ENCODE measurements at regions of chr3 and their contacts with region 1.

Region 1: DNA sequence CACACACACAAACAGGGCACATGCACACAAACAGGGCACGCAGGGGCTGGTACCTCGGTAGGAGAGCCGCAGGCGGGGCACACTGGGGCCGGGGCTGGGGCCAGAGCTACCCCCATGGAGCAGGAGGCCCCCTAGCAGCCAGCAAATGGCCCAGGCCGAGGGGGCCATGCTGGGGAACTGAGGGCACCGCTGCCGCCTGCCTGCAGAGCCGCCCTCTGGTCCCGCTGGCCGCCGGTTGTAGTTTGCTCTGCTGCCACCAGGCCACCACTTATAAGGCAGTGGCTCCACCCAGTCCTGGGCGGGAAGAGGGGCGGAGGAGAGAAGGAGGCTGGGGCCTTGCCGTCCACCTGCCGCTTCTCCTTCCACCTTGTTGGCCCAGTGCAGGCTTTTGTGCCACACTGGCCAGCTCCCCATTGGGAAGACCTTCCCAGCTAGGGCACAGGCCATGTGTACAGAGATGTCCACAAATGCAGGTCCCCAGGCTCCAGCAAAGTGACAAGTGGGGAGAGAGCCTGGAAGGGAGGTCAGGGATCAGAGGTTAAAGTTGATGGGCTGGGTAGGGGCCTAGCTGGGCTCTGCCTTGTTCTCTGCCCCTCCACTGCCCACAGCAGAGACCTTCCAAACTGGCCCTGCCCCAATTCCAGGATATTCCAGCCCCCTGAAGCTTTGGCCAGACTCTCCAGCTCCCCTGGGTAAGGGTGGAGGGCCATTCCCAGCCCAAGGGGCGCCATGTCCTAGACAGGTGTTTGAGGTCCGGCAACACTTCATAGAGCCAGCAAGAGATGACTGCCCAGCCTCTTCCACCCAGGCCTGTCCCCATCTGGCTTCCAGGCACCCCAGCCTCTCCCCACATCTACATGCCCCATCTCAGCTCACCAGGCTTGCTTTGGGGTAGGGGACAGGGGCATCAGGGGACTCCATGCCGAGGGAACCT is at the start of gene SEMA3G:
- DNase-seq: peak; percentile 64 to 74 (median 71)
- ATAC-seq: peak; percentile 96
- H3K4me3 ChIP-seq: no peak within 1 kb of the TSS
- H3K27ac ChIP-seq: no peak within 1 kb of the TSS
- H3K4me1 ChIP-seq: peaks cover 0 to 31% of the 10 kb centered on the region in 2 experiments; a peak in 2 of 5 replicates
- H3K27me3 ChIP-seq: peaks cover 0 to 4% of the 10 kb centered on the region in 2 experiments; a peak in 1 of 5 replicates
- CTCF ChIP-seq: peak; percentile 52 to 72 (median 54)
- EP300 ChIP-seq: no peak
- POLR2A ChIP-seq: no peak
- RAD21 ChIP-seq: no peak; a peak in 1 of 4 replicates
- polyA plus RNA-seq, gene SEMA3G: not detected

Region 2: DNA sequence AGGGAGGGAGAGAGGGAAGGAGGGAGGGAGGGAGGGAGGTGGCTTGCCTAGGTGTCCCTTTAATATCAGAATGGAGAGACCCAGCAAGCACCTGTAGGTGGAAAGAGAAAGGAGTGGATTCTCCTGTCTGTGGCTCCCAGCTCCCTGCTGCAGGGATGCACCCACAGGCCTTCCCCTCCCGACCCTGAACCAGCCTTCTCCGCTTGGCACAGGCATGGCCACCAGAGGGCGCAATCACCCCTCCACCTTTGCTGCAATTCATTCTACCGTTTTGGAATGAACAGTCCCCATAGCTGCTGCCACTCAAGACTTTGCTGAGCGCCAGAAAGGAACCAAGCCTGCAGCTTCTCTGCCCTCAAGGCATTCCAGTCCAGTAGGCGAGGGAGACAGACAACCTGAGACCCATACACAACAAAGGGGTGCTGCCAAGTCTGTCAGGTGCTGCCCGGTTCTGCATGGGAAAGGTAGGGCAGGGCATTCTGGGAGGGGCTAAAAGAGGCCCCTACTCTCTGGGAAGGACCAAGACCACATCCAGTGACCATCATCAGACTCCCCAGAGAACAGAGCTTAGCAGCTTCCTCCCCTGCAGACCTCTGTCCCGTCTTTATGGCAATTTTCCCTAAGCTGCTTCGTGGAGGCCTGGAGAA is 224.6 kb before region 1 on chr3:
- CTCF ChIA-PET with region 1: no interaction called
- POLR2A ChIA-PET with region 1: no interaction called
- in situ Hi-C with region 1: no loop called
- intact Hi-C with region 1: loop called (anchors 5 kb)
- DNase-seq: peak; percentile 75 to 82 (median 78)
- ATAC-seq: peak; percentile 91
- H3K4me3 ChIP-seq: no peak overlapping the region
- H3K27ac ChIP-seq: no peak overlapping the region
- H3K4me1 ChIP-seq: peaks cover 27 to 52% of the 10 kb centered on the region in 2 experiments
- H3K27me3 ChIP-seq: no peaks in the 10 kb centered on the region
- CTCF ChIP-seq: peak; percentile 83 to 87 (median 86)
- EP300 ChIP-seq: no peak
- POLR2A ChIP-seq: no peak
- RAD21 ChIP-seq: peak; percentile 39 to 75; a peak in 3 of 4 replicates

Region 3: DNA sequence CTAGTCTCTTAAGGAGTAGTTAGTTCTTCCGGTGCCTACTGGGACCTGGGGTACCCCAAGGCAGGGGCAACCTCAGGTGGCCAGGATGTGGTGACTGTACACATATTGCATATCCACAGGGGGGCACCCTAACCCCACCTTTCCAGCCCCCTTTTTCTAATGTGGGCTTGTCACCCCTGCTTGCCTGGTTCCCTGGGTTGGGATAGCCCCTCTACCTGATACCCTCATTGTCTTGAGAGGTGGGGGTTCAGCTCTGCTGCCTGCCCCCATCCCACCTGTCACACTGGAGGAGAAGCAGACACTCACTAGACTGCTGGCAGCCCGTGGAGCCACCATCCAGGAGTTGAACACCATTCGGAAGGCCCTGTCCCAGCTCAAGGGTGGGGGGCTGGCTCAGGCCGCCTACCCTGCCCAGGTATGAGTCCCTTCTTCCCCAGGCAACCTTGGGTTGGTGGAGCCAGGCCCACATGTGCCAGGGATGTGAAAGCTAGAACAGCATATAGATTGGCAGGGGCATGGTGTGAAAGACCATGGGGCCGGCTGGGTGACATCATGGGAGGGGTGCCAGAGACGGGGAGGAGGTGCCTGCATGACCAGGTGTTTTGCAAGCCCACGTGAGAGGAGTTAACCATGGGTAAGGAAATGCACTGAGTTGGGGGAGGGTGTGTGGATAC is 153.5 kb before region 1 on chr3:
- CTCF ChIA-PET with region 1: no interaction called
- POLR2A ChIA-PET with region 1: no interaction called
- in situ Hi-C with region 1: loop called (anchors 10 kb)
- intact Hi-C with region 1: loop called (anchors 5 kb)
- DNase-seq: peak in 2 of 4 experiments; percentile 52 to 57
- ATAC-seq: peak; percentile 48
- H3K4me3 ChIP-seq: no peak overlapping the region
- H3K27ac ChIP-seq: no peak overlapping the region
- H3K4me1 ChIP-seq: peaks cover 12 to 26% of the 10 kb centered on the region in 2 experiments; a peak in 4 of 5 replicates
- H3K27me3 ChIP-seq: no peaks in the 10 kb centered on the region
- CTCF ChIP-seq: peak; percentile 60 to 77 (median 77)
- EP300 ChIP-seq: no peak
- POLR2A ChIP-seq: no peak
- RAD21 ChIP-seq: peak; percentile 80 to 87

Region 4: GRCh38 chr3:52407779-52408178 is 37.3 kb before region 1 on chr3:
- CTCF ChIA-PET with region 1: interaction called, 7 read pairs
- POLR2A ChIA-PET with region 1: interaction called, 3 read pairs
- in situ Hi-C with region 1: no loop called
- intact Hi-C with region 1: loop called (anchors 1 kb)
- DNase-seq: no peak
- ATAC-seq: no peak
- H3K4me3 ChIP-seq: no peak overlapping the region
- H3K27ac ChIP-seq: no peak overlapping the region
- H3K4me1 ChIP-seq: peaks cover 11 to 14% of the 10 kb centered on the region in 2 experiments; a peak in 4 of 5 replicates
- H3K27me3 ChIP-seq: no peaks in the 10 kb centered on the region
- CTCF ChIP-seq: no peak
- EP300 ChIP-seq: no peak
- POLR2A ChIP-seq: no peak
- RAD21 ChIP-seq: no peak

Region 5: DNA sequence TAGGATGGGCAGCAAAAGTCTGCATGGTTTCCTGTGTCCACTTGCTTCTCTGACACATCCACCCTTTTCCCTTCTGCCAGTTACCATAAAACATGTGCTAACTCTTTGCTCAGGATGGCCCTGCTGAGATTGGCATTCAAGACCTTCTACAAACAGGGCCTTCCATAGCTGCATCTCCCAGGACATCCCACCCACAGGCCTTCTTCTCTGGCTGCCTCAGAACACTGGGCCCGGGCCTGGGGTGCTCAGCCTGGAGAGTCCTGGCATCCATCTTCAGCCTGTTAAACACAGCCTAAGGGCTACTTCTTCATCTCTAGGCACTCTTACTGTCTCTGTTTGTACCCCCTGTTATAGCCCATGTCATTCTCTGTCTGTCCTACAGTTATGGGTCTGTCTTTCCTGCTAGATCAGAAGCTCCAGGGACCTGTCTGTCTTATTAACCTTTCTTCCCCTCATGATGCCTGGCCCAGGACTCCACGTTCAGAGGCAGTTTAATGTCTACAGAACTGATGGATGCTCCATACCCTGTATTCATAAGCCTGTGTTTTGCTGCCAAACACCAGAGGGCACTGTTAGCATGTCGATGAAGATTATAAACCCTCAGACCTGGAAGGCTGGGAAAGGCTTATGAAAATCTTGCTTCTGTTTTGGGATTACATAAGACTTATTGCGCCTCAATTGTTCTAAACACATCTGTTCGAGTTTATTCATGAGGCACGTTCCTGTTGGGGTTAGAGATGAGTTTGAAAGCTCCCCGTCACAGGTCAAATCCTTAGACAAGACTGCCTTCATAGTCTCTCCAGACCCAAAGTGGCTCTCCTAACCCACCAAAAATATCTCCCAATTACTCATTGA is 16.7 kb before region 1 on chr3:
- CTCF ChIA-PET with region 1: interaction called, 8 read pairs
- POLR2A ChIA-PET with region 1: interaction called, 3 read pairs
- in situ Hi-C with region 1: no loop called
- intact Hi-C with region 1: loop called (anchors 1 kb)
- DNase-seq: peak in 3 of 4 experiments; percentile 31 to 58 (median 35)
- ATAC-seq: peak; percentile 92
- H3K4me3 ChIP-seq: no peak overlapping the region
- H3K27ac ChIP-seq: no peak overlapping the region
- H3K4me1 ChIP-seq: no peaks in the 10 kb centered on the region
- H3K27me3 ChIP-seq: no peaks in the 10 kb centered on the region; a peak in 1 of 5 replicates
- CTCF ChIP-seq: peak; percentile 67 to 77 (median 69)
- EP300 ChIP-seq: no peak
- POLR2A ChIP-seq: no peak
- RAD21 ChIP-seq: peak; percentile 55 to 76

Measured in K562 (cell line).